ENCODE measurements at regions of chr4 and their contacts with region 1.

Region 1: DNA sequence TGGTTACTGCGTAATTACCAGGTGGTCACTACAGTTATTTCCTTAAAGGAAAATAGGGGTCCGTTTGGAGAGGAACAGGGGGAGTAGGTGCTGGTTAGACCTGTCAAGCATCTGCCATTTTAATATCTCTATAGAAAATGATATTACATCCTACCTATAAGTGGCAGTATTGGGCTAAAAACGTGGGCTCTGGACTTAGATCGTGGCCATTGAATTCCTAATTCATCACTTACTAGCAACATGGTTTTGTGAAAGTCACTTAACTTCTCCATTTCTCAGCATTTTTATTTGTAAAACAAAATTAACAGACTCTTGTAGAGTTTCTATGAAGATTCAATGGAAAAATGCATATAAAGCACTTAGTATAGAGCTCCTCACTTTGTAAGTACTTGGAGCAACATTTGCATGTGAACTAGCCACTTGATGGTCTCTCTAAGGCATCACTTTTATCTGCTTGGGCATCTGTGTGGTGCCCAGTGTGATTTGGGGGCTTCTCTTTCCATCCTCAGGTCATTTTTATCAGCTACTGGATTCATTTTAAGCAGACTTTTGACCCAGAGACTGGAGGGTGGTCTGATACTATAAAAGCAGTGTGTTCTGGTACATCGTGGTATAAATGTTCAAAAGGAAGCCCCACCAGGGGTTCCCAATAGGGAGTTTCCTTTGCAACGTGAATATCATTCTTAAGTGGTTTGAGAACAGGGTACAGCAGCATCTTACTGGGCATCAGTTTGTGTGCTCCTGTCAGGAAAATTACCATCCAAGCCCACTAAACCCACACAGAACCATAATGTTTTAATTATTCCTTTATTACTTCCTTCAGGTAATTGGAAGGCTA is 42.7 kb upstream of the RASSF6 start:
- DNase-seq: peak; percentile 72
- H3K4me3 ChIP-seq: no peak overlapping the region
- H3K27ac ChIP-seq: no peak overlapping the region
- H3K4me1 ChIP-seq: peaks cover 19% of the 10 kb centered on the region
- H3K27me3 ChIP-seq: no peaks in the 10 kb centered on the region
- CTCF ChIP-seq: peak; percentile 52

Region 2: DNA sequence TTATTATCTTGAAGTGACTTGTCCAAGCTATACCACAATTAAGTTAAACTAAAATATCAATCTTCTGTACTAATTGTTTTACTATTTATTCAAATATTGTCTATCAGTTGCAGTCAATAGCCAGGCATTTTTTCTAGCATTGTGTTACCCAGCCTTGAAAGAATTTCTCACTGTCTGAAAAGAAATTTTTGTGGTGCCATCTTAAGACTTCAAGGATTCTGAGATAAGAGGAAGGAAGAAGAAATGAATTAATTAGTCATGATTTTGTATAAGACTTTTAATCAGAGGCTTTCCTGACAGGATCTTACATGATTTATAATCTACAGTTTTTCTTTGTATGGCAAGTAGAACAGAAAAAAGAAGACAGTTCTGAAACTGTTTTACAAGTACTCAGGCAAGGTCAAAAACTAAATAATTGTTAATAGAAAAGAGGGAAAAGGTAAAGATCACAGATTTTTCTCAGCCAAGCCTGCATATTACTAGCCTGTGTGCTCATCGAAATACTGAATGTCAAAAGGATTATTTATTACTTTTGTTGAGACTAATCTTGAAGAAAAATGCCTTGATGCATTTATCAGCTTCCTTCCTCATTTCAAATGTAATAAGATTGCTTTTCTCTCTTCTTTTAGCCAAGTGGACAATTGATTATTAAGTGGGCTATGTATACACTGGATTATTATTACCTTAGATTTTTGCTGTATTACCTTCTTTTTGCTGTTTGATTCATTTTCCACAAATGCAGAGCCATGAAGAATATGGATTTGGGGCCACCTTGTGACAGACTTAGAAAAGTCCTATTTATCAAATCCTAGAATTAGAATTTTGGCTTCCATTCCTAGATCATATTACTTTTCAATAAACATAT is 260.1 kb after region 1 on chr4:
- CTCF ChIA-PET with region 1: no interaction called
- POLR2A ChIA-PET with region 1: no interaction called
- intact Hi-C with region 1: loop called (anchors 2 kb)
- DNase-seq: peak; percentile 27
- H3K4me3 ChIP-seq: no peak overlapping the region
- H3K27ac ChIP-seq: no peak overlapping the region
- H3K4me1 ChIP-seq: no peaks in the 10 kb centered on the region
- H3K27me3 ChIP-seq: no peaks in the 10 kb centered on the region
- CTCF ChIP-seq: peak; percentile 47; the same call in 1 of the 2 replicates

Region 3: GRCh38 chr4:74133786-74134499 is 471.0 kb after region 1 on chr4:
- CTCF ChIA-PET with region 1: no interaction called
- POLR2A ChIA-PET with region 1: no interaction called
- intact Hi-C with region 1: loop called (anchors 2 kb)
- DNase-seq: peak; percentile 73
- H3K4me3 ChIP-seq: no peak overlapping the region
- H3K27ac ChIP-seq: no peak overlapping the region
- H3K4me1 ChIP-seq: no peaks in the 10 kb centered on the region
- H3K27me3 ChIP-seq: no peaks in the 10 kb centered on the region
- CTCF ChIP-seq: peak; percentile 68

Region 4: DNA sequence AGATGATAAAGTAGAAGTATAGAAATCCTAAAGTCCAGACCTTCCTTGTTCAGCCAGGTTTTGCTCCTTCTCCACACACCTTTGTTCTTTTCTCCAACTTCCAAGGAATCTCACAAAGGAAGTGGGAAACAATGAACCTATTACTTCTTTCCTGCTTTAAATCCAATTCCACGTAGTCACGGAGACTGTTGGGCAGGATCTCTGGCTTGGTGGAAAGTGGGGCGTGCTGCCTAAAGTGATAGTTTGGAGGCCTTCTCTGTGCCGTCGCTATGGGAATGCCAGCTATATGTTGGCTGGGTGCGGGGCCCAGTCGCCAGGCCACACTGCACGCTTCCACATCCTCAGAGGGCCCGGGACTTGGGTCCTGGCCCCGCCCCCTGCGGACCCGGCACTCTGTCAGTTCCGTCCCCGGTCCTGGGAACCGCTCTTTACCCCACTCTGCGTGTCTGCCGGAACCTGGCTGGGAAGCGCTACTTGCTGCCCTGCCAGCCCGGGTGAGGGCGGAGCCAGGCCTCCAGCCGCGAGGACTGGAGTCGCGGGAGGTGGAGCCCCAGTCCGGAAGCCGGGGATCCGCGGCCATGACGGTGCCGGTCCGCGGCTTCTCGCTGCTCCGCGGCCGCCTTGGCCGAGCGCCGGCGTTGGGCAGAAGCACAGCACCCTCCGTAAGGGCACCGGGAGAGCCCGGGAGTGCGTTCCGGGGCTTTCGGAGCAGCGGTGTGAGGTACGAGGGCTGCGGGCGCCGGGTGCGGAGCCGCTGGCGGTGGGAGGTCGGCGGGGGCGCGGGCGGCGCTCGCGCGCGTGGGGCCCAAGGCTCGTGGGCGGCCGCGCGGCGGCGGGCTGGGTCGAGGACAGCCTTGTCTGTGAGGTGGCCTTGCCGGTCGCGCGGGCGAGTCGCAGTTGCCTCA is 494.9 kb after region 1 on chr4 and contains the start of gene MTHFD2L:
- CTCF ChIA-PET with region 1: interaction called, 10 read pairs
- POLR2A ChIA-PET with region 1: no interaction called
- intact Hi-C with region 1: no loop called
- DNase-seq: peak; percentile 90
- H3K4me3 ChIP-seq: peak within 1 kb of the TSS; percentile 58
- H3K27ac ChIP-seq: peak within 1 kb of the TSS; percentile 79
- H3K4me1 ChIP-seq: peaks cover 5% of the 10 kb centered on the region
- H3K27me3 ChIP-seq: no peaks in the 10 kb centered on the region
- CTCF ChIP-seq: no peak
- total RNA-seq, gene MTHFD2L: 11.3 and 11.4 TPM in 2 replicates

Region 5: GRCh38 chr4:74311696-74312313 is 648.9 kb after region 1 on chr4:
- CTCF ChIA-PET with region 1: no interaction called
- POLR2A ChIA-PET with region 1: no interaction called
- intact Hi-C with region 1: loop called (anchors 10 kb)
- DNase-seq: peak; percentile 58
- H3K4me3 ChIP-seq: no peak overlapping the region
- H3K27ac ChIP-seq: no peak overlapping the region
- H3K4me1 ChIP-seq: peaks cover 19% of the 10 kb centered on the region
- H3K27me3 ChIP-seq: no peaks in the 10 kb centered on the region
- CTCF ChIP-seq: peak; percentile 57

Region 6: GRCh38 chr4:74982546-74983252 is 1319.8 kb after region 1 on chr4:
- CTCF ChIA-PET with region 1: no interaction called
- POLR2A ChIA-PET with region 1: no interaction called
- intact Hi-C with region 1: no loop called
- DNase-seq: no peak
- H3K4me3 ChIP-seq: no peak overlapping the region
- H3K27ac ChIP-seq: no peak overlapping the region
- H3K4me1 ChIP-seq: no peaks in the 10 kb centered on the region
- H3K27me3 ChIP-seq: no peaks in the 10 kb centered on the region
- CTCF ChIP-seq: no peak